Transverse colon (tissue), 4 donors: ENCODE measurements at regions of chr7 and their contacts with region 1.

Region 1: GRCh38 chr7:30062591-30062990 is 34.4 kb downstream of the PLEKHA8 start:
- DNase-seq: no peak
- H3K4me3 ChIP-seq: no peak overlapping the region
- H3K27ac ChIP-seq: no peak overlapping the region
- H3K4me1 ChIP-seq: peaks cover 0 to 5% (median 0%) of the 10 kb centered on the region in 4 donors
- H3K27me3 ChIP-seq: no peaks in the 10 kb centered on the region
- CTCF ChIP-seq: peak in 4 of 5 experiments; percentile 41 to 47 (median 45)
- EP300 ChIP-seq: no peak
- POLR2A ChIP-seq: no peak

Region 2: GRCh38 chr7:29614229-29614628 is 448.4 kb before region 1 on chr7:
- in situ Hi-C with region 1: no loop called
- intact Hi-C with region 1: no loop called
- DNase-seq: no peak
- H3K4me3 ChIP-seq: no peak overlapping the region
- H3K27ac ChIP-seq: no peak overlapping the region
- H3K4me1 ChIP-seq: peaks cover 0 to 10% (median 4%) of the 10 kb centered on the region in 4 donors
- H3K27me3 ChIP-seq: no peaks in the 10 kb centered on the region
- CTCF ChIP-seq: no peak
- EP300 ChIP-seq: no peak
- POLR2A ChIP-seq: no peak

Region 3: GRCh38 chr7:29748286-29749108 is 314.1 kb before region 1 on chr7:
- in situ Hi-C with region 1: loop called in 1 of 4 experiments (anchors 25 kb)
- intact Hi-C with region 1: no loop called
- DNase-seq: no peak
- H3K4me3 ChIP-seq: no peak overlapping the region
- H3K27ac ChIP-seq: no peak overlapping the region
- H3K4me1 ChIP-seq: peaks cover 0 to 7% (median 3%) of the 10 kb centered on the region in 4 donors
- H3K27me3 ChIP-seq: no peaks in the 10 kb centered on the region
- CTCF ChIP-seq: peak; percentile 42 to 46 (median 44)
- EP300 ChIP-seq: no peak
- POLR2A ChIP-seq: no peak

Region 4: GRCh38 chr7:30406664-30407425 is 344.3 kb after region 1 on chr7:
- in situ Hi-C with region 1: no loop called
- intact Hi-C with region 1: no loop called
- DNase-seq: no peak
- H3K4me3 ChIP-seq: no peak overlapping the region
- H3K27ac ChIP-seq: no peak overlapping the region
- H3K4me1 ChIP-seq: no peaks in the 10 kb centered on the region
- H3K27me3 ChIP-seq: no peaks in the 10 kb centered on the region
- CTCF ChIP-seq: no peak
- EP300 ChIP-seq: no peak
- POLR2A ChIP-seq: no peak